Endothelial cell of umbilical vein (primary cell): ENCODE measurements at regions of chr7 and their contacts with region 1.

Region 1: GRCh38 chr7:85890244-85890811 is 703.5 kb upstream of the SEMA3D start:
- DNase-seq: peak; percentile 28
- H3K4me3 ChIP-seq: no peak overlapping the region
- H3K27ac ChIP-seq: no peak overlapping the region
- H3K4me1 ChIP-seq: no peaks in the 10 kb centered on the region
- H3K27me3 ChIP-seq: no peaks in the 10 kb centered on the region
- CTCF ChIP-seq: peak in 1 of 2 donors; percentile 25
- POLR2A ChIP-seq: no peak

Region 2: DNA sequence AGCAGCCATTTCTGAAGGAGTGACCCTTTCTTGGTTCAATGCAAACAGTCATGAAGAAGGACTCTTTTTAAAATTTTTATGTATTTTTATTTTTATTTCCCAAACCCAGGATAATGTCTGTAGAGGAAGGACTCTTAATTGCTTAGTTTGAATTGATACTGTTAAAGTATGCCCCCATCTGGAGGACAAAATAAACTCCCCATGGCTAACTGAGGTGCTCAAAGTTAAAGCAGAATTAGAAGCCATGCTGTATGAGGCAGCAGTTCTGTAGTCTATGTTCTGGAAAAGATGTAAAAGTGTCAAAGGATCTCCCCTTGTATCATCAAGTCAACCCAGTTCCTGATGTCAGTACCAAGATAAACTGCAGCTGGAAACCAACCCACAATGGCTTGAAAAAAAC is 135.5 kb after region 1 on chr7:
- CTCF ChIA-PET with region 1: no interaction called
- POLR2A ChIA-PET with region 1: no interaction called
- dilution Hi-C with region 1: no loop called
- intact Hi-C with region 1: loop called (anchors 1 kb)
- DNase-seq: no peak
- H3K4me3 ChIP-seq: no peak overlapping the region
- H3K27ac ChIP-seq: no peak overlapping the region
- H3K4me1 ChIP-seq: no peaks in the 10 kb centered on the region
- H3K27me3 ChIP-seq: no peaks in the 10 kb centered on the region
- CTCF ChIP-seq: no peak
- POLR2A ChIP-seq: no peak

Region 3: DNA sequence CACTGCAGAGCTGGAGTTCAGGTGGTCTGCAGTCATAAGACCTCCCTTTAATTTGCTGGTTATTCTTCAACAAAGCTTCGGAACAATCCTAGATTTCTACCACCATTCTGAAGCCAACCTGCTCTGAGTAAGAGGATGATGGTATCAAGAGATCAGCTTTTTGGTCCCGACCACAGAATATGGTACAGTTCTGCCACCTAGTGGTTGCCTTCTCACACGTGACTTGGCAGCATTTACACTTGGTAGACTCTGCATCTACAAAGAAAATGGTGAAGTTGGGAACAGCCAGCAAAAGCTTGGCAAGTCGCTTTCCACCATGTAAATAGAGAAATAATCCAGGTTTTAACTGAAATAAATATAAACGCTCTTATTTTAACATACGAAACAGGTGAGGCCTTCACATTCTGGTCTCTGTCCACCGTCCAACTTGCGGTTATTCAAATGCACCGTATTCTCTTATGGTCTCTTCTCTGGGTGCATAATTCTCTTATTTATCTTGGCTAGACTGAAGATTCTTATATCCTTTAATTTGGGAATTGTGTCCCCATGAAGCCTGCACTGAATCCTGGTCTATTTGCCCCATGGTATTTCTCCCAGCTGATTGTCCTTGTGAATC is 579.5 kb after region 1 on chr7:
- CTCF ChIA-PET with region 1: interaction called, 134 read pairs
- POLR2A ChIA-PET with region 1: no interaction called
- dilution Hi-C with region 1: no loop called
- intact Hi-C with region 1: loop called (anchors 1 kb)
- DNase-seq: peak; percentile 63
- H3K4me3 ChIP-seq: no peak overlapping the region
- H3K27ac ChIP-seq: no peak overlapping the region
- H3K4me1 ChIP-seq: no peaks in the 10 kb centered on the region
- H3K27me3 ChIP-seq: no peaks in the 10 kb centered on the region
- CTCF ChIP-seq: peak; percentile 64 to 73
- POLR2A ChIP-seq: no peak

Region 4: DNA sequence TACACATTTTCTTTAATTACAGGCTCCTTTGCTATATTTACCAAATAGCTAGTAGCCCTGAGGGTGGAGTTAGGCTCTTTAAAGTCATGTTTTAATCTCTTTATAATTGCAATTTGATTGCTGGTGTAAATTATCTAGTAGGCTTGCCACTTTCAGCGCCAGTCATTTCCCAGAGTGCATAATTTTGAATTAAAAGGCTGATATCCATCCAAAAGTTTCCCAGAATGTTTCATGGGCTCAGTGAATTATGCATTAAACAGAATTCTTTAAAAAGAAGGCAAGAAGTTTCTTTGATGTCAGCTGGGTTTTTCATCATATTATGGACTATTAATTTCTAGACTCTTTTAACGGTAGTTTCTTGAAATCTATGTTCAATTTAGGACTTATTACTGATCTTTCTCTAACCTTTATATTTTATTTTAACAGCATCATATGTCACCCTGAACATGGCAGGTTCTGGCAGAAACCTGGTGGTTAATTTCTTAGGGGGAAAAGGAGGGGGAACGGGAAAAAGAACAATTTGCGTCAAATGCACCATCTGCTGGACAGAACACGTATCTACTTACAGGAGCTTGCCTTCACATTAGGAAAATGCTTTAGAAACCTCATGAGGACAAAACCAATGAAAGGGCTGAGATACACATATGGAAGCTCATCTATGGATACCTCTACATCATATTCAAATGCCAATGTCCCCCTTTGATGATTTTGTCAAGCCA is 924.5 kb after region 1 on chr7:
- CTCF ChIA-PET with region 1: interaction called, 18 read pairs
- POLR2A ChIA-PET with region 1: no interaction called
- dilution Hi-C with region 1: no loop called
- intact Hi-C with region 1: loop called (anchors 2 kb)
- DNase-seq: peak; percentile 12
- H3K4me3 ChIP-seq: no peak overlapping the region
- H3K27ac ChIP-seq: no peak overlapping the region
- H3K4me1 ChIP-seq: no peaks in the 10 kb centered on the region
- H3K27me3 ChIP-seq: no peaks in the 10 kb centered on the region
- CTCF ChIP-seq: peak; percentile 22 to 41
- POLR2A ChIP-seq: no peak

Region 5: GRCh38 chr7:86904949-86905834 is 1014.9 kb after region 1 on chr7:
- CTCF ChIA-PET with region 1: interaction called, 35 read pairs
- POLR2A ChIA-PET with region 1: no interaction called
- dilution Hi-C with region 1: no loop called
- intact Hi-C with region 1: loop called (anchors 2 kb)
- DNase-seq: peak; percentile 31
- H3K4me3 ChIP-seq: no peak overlapping the region
- H3K27ac ChIP-seq: no peak overlapping the region
- H3K4me1 ChIP-seq: no peaks in the 10 kb centered on the region
- H3K27me3 ChIP-seq: no peaks in the 10 kb centered on the region
- CTCF ChIP-seq: peak; percentile 45 to 47
- POLR2A ChIP-seq: no peak

Region 6: GRCh38 chr7:87600130-87601124 is 1710.1 kb after region 1 on chr7 and contains the start of gene ABCB1:
- CTCF ChIA-PET with region 1: no interaction called
- POLR2A ChIA-PET with region 1: no interaction called
- dilution Hi-C with region 1: no loop called
- intact Hi-C with region 1: no loop called
- DNase-seq: peak; percentile 52
- H3K4me3 ChIP-seq: peak within 1 kb of the TSS; percentile 6 to 85 (median 58)
- H3K27ac ChIP-seq: no peak within 1 kb of the TSS
- H3K4me1 ChIP-seq: peaks cover 10% of the 10 kb centered on the region
- H3K27me3 ChIP-seq: peaks cover 22 to 40% of the 10 kb centered on the region in 2 experiments
- CTCF ChIP-seq: no peak
- POLR2A ChIP-seq: no peak
- total RNA-seq, gene ABCB1: 7.1 and 13.4 TPM in 2 replicates